Lower leg skin (tissue), 4 donors: ENCODE measurements at regions of chr15 and their contacts with region 1.

Region 1: GRCh38 chr15:72397796-72398588 is at the start of gene TMEM202:
- DNase-seq: no peak
- H3K4me3 ChIP-seq: no peak within 1 kb of the TSS
- CTCF ChIP-seq: no peak
- POLR2A ChIP-seq: no peak
- total RNA-seq, gene TMEM202: not detected

Region 2: DNA sequence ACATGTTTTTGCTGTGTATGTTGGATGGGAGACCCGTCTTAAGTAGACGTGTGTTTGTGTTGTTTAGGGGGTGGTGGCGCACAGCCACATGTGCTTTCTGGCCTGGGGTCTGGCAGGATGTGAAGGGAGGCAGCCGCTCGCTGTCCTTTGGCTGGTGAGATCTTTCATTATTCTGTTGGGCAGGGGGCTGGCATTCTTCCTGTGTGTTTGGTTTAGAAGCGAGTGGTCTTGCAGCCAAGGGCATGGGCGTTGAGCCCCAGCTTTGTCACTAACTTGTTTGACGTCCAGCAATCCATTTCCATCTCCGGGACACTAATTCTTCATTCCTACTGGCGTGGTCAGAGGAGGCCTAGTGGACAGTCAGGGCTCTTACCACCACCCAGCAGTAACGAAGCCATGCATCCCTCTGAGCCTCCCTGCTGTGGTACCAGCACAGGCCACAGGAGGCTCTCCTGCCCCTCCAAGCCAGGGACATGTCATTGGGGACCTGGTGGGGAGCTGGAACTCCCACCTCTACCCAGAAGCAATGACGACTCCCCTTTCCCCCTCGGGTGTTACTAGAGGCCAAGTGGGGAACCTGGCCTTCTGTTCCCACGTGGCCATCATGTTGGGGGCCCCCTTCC is 1272.0 kb before region 1 on chr15:
- intact Hi-C with region 1: loop called (anchors 5 kb)
- DNase-seq: no peak
- H3K4me3 ChIP-seq: no peak overlapping the region
- CTCF ChIP-seq: no peak
- POLR2A ChIP-seq: no peak

Region 3: DNA sequence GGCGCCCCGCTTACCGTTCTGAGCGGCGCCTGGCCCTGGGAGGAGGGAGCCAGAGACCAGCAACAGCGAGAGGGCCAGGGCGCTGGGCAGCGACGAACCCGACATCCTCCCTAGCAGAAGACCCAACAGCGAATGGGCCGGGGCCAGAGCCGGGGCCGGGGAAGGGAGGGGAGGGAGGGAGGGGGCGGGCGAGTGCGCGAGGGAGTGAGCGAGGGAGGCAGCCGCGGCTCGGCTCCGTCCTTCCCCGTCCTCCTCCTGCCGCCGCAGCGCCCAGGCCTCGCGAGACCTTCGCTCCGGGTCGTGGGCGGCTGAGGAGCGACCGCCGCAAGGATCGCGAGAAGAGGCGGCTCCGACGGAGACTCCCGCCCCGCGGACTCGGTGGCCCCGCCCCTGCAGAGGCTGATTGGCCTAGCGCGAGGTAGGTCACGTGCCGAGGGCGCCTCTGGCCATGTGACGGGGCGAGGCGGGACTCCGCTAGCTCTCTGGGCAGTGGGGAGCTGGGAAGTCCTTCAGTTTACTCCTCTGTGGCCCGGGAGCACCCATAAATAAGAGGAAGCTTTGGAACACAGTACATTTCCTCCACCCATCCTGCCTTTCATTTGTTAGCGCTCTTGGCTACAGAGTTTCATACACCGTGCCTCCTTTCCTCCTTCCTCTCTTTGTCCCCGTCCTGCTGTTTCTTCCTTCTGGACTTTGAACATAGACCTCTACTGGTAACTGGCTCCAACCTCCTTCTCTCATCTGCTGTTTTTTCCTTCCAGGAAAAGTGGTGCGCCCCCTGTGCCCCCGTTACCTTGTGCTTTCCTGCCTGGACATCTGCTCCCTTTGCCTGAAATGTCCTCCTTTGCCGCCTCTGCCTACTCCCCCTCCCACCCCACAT is 1235.4 kb after region 1 on chr15 and contains the start of gene NPTN:
- intact Hi-C with region 1: no loop called
- DNase-seq: peak; percentile 98 to 99
- H3K4me3 ChIP-seq: peak within 1 kb of the TSS; percentile 94
- CTCF ChIP-seq: no peak
- POLR2A ChIP-seq: no peak
- total RNA-seq, gene NPTN: 124 to 181 (median 150) TPM